Mammary epithelial cell (primary cell): ENCODE measurements at regions of chr16 and their contacts with region 1.

Region 1: DNA sequence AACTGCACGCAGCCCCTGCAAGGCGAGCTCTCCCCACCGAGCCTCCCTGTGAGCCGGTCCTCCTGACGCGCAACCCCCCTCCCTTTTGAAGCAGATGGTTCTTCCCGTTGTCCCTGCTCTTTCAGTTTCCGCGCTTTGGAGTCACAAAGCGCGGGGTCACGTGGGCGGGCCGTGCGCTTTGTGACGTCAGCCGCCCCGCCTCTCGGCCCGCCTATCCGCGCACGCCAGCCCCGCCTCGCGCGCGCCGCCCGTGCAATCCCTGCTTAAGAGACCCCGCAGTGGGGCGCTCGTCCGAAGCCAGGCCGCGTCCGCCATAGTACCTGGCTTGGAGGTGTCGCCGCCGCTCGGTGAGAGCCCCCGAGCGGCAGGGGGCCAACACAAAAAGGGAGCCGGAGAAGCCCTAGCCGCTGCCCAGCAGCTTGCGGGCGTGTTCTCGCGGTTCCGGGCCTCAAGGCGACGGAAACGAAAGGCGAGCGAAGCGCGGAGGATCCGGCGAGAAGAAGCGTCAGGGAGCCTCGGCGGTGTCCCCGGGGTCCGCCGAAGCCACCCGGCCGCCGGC is at the start of gene RBBP6:
- DNase-seq: peak; percentile 96
- H3K4me3 ChIP-seq: peak within 1 kb of the TSS; percentile 87 to 98 (median 97)
- H3K27ac ChIP-seq: peak within 1 kb of the TSS; percentile 93
- H3K4me1 ChIP-seq: peaks cover 18% of the 10 kb centered on the region
- H3K27me3 ChIP-seq: no peaks in the 10 kb centered on the region
- CTCF ChIP-seq: peak in 1 of 2 donors; percentile 38
- total RNA-seq, gene RBBP6: 33.0 to 40.4 TPM

Region 2: DNA sequence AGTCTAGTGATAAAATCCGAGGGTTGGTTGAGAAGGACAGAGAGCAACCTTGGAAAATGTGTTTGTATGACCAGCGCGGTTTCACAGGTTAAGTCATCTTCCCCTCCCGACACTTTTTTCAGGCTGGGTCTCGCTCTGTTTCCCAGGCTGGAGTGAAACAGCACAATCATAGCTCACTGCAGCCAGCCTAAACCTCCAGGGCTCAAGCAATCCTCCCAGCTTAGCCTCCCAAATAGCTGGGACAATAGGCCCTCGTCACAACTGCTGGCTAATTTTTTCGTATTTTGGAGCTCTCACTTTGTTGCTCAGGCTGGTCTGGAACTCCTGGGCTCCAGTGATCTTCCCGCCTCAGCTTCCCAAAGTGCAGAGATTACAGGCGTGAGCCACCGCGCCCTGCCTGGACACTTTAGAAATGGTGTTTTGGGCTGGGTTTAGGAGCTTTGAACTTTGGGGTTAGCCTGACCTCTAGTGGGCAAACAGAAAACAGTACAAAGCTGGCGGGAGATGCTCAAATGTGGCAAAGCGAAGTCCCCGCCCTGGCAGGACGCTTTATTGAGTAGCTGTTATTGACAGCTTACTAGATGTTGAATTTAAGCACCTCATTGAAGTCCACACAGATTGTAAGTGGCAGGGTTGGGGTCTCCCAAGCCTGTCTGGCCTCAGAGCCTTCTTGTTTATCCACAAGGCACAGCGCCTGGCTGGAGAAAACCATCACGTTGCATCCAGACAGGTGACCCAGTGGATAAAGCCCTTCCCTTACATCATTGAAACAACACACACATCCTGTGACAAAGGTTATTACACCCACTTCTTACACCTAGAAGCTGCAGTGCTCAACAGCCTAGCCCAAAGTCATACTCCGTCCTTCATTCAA is 34.7 kb before region 1 on chr16:
- CTCF ChIA-PET with region 1: no interaction called
- dilution Hi-C with region 1: no loop called
- in situ Hi-C with region 1: no loop called
- intact Hi-C with region 1: no loop called
- DNase-seq: peak; percentile 49
- H3K4me3 ChIP-seq: no peak overlapping the region
- H3K27ac ChIP-seq: no peak overlapping the region
- H3K4me1 ChIP-seq: no peaks in the 10 kb centered on the region
- H3K27me3 ChIP-seq: peaks cover 2% of the 10 kb centered on the region
- CTCF ChIP-seq: peak; percentile 70 to 74

Region 3: DNA sequence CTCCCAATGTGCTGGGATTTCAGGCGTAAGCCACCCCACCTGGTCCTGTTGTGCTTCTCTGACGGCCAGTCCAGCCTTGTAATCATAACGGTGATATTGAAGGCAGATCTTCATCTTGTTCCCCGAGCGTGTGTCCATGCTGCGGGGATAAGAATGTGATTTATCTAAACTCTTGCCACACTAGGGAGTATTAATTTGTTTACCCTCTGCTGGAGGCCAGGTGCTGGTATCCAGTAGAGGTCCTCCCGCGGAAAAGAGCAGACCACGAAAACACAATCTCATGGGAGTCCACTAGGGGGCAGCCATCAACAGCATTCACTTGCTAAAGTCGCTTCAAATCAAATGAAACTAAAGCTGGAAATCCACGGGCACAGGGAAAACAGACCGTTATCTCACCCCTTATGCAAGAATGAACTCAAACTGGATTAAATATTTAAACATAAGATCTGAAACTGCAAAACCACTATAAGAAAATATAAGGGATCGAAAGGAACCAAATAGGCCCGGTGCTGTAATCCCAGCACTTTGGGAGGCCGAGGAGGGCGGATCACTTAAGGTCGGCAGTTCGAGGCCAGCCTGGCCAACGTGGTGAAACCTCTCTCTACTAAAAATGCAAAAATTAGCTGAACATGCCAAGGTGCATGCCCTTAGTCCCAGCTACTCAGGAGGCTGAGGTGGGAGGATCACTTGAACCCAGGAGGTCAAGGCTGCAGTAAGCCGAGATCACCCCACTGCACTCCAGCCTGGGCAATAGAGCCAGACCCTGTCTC is 22.3 kb before region 1 on chr16:
- CTCF ChIA-PET with region 1: interaction called, 5 read pairs
- dilution Hi-C with region 1: no loop called
- in situ Hi-C with region 1: no loop called
- intact Hi-C with region 1: loop called (anchors 1 kb)
- DNase-seq: peak; percentile 71
- H3K4me3 ChIP-seq: no peak overlapping the region
- H3K27ac ChIP-seq: no peak overlapping the region
- H3K4me1 ChIP-seq: no peaks in the 10 kb centered on the region
- H3K27me3 ChIP-seq: no peaks in the 10 kb centered on the region
- CTCF ChIP-seq: peak; percentile 93 to 95

Region 4: GRCh38 chr16:24525970-24526559 is 13.3 kb before region 1 on chr16:
- CTCF ChIA-PET with region 1: no interaction called
- dilution Hi-C with region 1: no loop called
- in situ Hi-C with region 1: no loop called
- intact Hi-C with region 1: loop called (anchors 2 kb)
- DNase-seq: peak; percentile 54
- H3K4me3 ChIP-seq: no peak overlapping the region
- H3K27ac ChIP-seq: no peak overlapping the region
- H3K4me1 ChIP-seq: peaks cover 8% of the 10 kb centered on the region
- H3K27me3 ChIP-seq: no peaks in the 10 kb centered on the region
- CTCF ChIP-seq: no peak

Region 5: DNA sequence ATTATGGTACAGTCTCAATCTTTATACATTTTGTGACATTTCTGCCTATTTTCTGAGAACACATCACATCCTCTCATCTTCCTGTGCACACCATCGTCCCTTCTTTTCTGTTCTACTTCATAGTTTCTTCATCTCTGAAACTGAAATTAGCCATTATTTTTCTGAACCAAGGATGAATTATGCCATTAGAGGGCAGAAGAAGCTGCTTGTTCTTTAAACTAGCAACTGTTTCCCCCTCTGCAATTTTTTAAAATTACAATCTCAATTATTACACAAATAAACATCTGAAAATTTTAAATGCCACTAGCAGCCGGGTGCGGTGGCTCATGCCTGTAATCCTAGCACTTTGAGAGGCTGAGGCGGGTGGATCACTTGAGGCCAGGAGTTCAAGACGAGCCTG is 41.3 kb after region 1 on chr16:
- CTCF ChIA-PET with region 1: no interaction called
- dilution Hi-C with region 1: no loop called
- in situ Hi-C with region 1: no loop called
- intact Hi-C with region 1: no loop called
- DNase-seq: peak; percentile 6
- H3K4me3 ChIP-seq: no peak overlapping the region
- H3K27ac ChIP-seq: no peak overlapping the region
- H3K4me1 ChIP-seq: peaks cover 2% of the 10 kb centered on the region
- H3K27me3 ChIP-seq: no peaks in the 10 kb centered on the region
- CTCF ChIP-seq: peak; percentile 15 to 52

Region 6: DNA sequence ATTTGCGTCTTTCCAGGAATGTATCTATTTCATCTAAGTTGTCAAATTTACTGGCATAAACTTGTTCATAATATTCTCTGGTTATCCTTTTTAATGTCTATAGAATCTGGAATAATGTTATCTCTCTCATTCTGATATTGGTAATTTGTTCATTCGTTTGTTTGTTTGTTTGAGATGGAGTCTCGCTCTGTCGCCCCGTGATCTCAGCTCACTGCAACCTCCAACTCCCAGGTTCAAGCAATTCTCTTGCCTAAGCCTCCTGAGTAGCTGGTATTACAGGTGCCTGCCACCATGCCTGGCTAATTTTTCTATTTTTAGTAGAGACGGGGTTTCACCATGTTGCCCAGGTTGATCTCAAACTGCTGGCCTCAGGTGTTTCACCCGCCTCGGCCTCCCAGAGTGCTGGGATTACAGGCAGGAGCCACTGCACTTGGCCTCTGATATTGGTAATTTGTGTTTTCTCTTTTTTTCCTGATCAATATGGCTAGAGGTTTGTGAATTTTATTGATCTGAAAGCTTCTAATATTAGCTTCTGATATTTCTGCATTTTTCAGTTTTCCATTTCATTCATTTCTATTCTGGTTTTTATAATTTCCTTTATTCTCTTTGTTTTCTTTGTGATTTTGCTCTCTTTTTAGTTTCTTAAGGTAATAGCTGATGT is 59.5 kb after region 1 on chr16:
- CTCF ChIA-PET with region 1: no interaction called
- dilution Hi-C with region 1: no loop called
- in situ Hi-C with region 1: no loop called
- intact Hi-C with region 1: no loop called
- DNase-seq: no peak
- H3K4me3 ChIP-seq: no peak overlapping the region
- H3K27ac ChIP-seq: no peak overlapping the region
- H3K4me1 ChIP-seq: no peaks in the 10 kb centered on the region
- H3K27me3 ChIP-seq: no peaks in the 10 kb centered on the region
- CTCF ChIP-seq: no peak

Region 7: DNA sequence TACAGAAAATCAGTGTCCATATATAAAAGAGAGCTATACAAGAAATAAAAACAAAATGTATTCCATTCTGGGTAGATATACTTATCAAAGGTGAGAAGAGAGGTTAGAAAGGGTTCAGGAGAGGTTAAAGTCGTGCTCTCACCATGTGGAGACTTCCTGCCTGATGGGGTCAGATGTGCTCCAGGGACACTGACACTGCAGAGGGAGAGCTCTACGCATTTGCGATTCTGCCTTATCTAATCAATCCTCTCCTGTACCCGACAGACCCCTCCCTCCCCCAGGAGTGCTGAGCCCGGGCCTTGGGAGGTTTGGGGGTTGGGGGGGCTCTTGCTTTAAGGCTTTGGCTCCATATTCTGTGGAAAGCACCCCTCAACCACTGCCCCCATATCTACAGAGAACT is 289.8 kb after region 1 on chr16:
- CTCF ChIA-PET with region 1: interaction called, 11 read pairs
- dilution Hi-C with region 1: no loop called
- in situ Hi-C with region 1: no loop called
- intact Hi-C with region 1: no loop called
- DNase-seq: no peak
- H3K4me3 ChIP-seq: no peak overlapping the region
- H3K27ac ChIP-seq: no peak overlapping the region
- H3K4me1 ChIP-seq: peaks cover 6% of the 10 kb centered on the region
- H3K27me3 ChIP-seq: no peaks in the 10 kb centered on the region
- CTCF ChIP-seq: no peak